ENCODE measurements at regions of chr3 and their contacts with region 1.

Region 1: GRCh38 chr3:102229062-102229655 is 205.7 kb upstream of the ZPLD1 start:
- DNase-seq: peak; percentile 67
- ATAC-seq: peak; percentile 90
- H3K4me3 ChIP-seq: no peak overlapping the region
- H3K27ac ChIP-seq: no peak overlapping the region
- H3K4me1 ChIP-seq: peaks cover 5% of the 10 kb centered on the region
- H3K27me3 ChIP-seq: no peaks in the 10 kb centered on the region
- CTCF ChIP-seq: peak; percentile 95

Region 2: DNA sequence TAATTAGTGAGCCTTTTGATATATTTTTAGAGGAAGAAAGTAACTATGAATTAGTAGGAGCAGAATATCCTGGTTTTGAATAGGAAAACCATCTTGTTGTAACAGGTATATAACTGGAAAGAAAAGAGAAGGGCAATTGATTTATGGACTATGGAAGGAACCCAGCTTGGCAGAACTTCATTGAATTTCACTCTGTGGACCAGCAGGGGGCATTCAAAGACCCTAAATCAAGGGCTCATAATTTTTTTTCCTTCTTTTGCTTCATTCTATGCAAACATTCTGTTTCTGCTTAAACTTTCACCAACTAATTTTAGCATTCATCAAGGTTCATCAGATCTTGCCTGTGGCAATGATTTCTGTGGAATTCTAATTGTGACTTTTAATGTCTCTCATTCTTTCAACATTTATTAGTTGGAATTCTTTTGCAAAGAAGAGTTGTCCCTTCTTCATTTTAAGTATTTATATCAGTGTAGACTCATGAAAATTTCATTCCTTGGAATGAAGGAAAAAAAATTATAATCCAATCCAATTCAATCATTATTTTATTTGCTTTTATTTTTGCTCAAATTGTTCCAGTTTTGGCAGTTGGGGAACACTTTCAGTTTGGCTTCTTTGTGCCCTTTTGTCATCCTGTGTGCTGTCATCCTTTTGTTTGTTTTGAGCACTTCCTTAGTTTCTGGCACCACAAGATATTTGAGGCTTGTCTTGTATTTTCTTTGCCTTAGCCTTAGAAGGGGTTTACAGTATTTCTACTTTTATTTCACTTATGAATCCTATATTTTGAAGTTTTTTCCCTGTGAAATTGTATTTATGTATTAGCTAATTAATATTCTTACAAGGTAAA is 419.8 kb before region 1 on chr3:
- intact Hi-C with region 1: loop called (anchors 5 kb)
- DNase-seq: no peak
- ATAC-seq: peak; percentile 82
- H3K4me3 ChIP-seq: no peak overlapping the region
- H3K27ac ChIP-seq: peak overlapping the region; percentile 32
- H3K4me1 ChIP-seq: peaks cover 11% of the 10 kb centered on the region
- H3K27me3 ChIP-seq: no peaks in the 10 kb centered on the region
- CTCF ChIP-seq: peak; percentile 77

Measured in upper lobe of right lung (tissue), 1 donor.